Activated naive CD4-positive, alpha-beta T cell treated with anti-CD3 and anti-CD28 coated beads for 36 hours (primary cell): ENCODE measurements at regions of chr12 and their contacts with region 1.

Region 1: DNA sequence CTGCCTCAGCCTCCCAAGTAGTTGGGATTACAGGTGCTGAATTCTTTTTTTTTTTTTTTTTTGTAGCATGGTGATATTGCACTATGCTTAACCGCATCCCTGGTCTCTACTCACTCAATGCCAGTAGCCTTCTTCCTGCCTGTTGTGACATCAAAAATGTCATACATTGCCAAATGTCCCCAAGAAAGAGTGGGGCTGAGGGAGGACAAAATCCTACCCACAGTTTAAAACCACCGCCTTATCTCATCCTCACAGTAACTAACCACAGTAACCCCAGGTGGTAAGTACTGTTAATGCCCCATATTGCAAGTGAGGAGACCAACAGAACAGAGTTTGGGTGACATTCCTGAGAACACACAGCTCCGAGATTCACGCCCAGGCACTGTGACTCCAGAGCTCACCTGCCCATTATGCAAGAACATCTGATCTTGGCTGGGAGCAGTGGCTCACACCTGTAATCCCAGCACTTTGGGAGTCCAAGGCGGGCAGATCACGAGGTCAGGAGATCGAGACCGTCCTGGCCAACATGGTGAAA is 19.6 kb downstream of the MORN3 start:
- DNase-seq: no peak
- H3K4me3 Mint-ChIP-seq: no peak overlapping the region
- H3K27ac Mint-ChIP-seq: peak overlapping the region; percentile 25
- H3K4me1 Mint-ChIP-seq: peaks cover 31% of the 10 kb centered on the region
- H3K27me3 Mint-ChIP-seq: no peaks in the 10 kb centered on the region

Region 2: GRCh38 chr12:121038861-121039666 is 610.8 kb before region 1 on chr12 and contains the start of gene OASL:
- CTCF ChIA-PET with region 1: no interaction called
- intact Hi-C with region 1: loop called (anchors 10 kb)
- DNase-seq: peak; percentile 55
- H3K4me3 Mint-ChIP-seq: peak within 1 kb of the TSS; percentile 75
- H3K27ac Mint-ChIP-seq: peak within 1 kb of the TSS; percentile 70
- H3K4me1 Mint-ChIP-seq: peaks cover 50% of the 10 kb centered on the region
- H3K27me3 Mint-ChIP-seq: peaks cover 8% of the 10 kb centered on the region
- total RNA-seq, gene OASL: 12.4 to 13.4 TPM